ENCODE measurements at regions of chr7 and their contacts with region 1.

Region 1: GRCh38 chr7:76179686-76180085 is 22.0 kb upstream of the SRRM3 start:
- DNase-seq: no peak
- H3K27ac ChIP-seq: no peak overlapping the region
- CTCF ChIP-seq: no peak

Region 2: DNA sequence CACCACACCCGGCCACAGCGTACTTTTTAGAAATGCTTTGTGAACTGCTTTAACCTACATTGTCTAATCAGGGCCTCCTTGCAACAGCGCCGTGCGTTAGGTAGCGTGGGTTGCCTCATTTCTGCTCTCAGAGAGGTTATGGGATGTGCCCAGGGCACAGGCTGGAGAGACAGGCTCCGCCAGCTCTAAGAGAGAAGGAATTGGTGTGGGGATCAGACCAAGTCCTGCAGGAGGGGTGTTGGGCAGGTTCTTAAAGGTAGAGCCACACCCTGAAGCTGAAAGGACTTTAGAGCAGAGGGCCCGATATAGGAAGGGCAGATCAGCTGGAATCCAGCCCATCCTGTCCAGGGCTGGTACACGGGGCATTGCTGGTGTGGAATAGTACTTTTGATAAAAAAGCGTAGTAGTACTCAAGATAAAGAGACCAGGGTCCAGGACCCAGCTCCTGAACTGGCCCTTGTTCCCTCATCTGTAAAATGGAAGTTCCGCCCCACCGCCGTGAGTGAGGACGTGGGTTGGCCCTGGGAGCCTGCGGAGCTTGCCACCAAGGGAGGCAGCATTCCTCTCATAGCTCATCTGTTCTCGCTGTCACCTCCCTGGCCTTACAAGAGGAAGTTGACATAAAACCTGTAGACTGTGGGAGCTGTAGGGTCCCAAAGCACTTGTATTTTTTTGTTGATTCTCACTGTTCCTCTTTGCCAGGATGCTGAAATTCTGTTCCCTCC is 222.5 kb before region 1 on chr7:
- CTCF ChIA-PET with region 1: no interaction called
- POLR2A ChIA-PET with region 1: no interaction called
- DNase-seq: no peak
- H3K27ac ChIP-seq: peak overlapping the region; percentile 7; the same call in 1 of the 2 replicates
- CTCF ChIP-seq: no peak

Region 3: DNA sequence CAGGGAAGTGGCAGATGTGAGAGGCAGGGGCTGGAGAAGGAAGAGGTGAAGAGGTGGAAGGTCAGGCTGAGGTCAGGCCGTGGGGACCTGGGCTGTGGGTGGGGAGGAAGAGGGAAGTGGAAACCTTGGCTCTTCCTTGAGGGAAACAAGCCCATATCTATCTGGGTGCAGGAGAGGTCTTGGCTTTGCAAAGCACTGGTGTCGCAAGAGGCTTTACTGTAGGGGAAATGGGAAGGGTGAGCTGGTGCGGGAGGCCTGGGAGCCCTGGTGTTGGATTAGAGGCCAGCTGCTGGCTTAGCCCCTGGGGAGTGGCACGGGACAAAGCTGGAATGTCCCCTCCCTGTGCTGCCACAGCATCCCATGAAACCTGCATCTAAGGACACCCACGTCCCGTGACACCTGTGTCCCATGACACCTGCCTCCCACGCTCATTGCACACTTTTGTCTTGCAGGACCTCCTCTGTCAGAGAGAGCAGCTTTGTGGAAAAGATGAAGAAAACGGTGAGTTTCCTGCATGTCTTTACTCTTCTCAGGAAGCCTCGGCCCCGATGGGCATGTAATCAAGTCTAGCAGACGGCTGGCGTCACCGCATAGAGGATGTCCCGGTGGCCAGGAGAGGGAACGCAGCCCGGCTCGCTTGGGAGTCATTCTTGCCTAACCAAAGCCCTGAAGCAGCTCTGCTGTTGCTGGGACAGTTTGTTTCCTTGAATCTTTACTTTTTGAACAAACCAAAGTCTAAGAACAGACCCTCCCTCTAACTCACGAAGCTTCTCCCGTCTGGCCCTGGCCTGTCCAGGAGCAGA is 207.5 kb before region 1 on chr7:
- CTCF ChIA-PET with region 1: no interaction called
- POLR2A ChIA-PET with region 1: no interaction called
- DNase-seq: no peak
- H3K27ac ChIP-seq: peak overlapping the region; percentile 6; the same call in 1 of the 2 replicates
- CTCF ChIP-seq: no peak

Region 4: DNA sequence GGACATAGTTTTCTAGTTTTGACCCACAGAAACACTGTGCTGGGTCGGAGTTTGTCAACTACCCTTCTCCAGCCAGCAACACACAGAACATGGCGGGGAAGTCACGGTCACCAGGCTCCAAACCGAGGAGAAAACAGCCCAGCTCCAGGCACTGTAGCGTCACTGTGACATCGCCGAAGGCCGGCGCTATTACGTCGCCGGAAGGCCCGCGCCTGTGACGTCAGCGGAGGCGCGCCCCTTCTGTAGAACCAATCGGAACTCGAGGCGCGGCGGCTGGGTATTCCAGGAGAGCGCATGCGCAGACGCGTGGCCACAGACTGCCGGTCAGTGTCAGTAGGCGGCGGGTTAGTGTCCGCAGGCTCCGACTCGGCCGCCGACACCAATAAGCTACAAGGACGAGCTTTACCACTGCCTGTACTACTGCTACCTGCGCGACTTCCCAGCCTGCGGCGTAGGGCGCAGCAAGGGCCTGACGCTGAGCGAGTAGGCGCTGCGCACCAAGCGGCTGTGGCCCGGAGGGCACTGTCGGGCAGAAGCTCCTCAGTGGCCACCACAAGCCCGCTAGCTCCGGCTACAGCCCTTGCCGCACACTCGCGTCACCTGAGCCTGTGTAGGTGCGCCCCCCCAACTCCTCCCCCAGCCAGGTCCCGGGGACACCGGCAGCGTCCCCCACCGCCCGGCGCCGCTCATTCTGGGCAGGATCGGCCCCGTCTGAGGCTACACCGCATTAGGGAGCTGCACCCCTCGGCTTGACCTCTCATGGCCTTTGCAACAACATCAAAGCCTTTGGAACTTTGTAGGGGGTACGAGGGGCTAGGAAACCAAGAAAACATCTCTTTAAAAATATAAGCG is 13.1 kb before region 1 on chr7:
- CTCF ChIA-PET with region 1: interaction called, 17 read pairs
- POLR2A ChIA-PET with region 1: no interaction called
- DNase-seq: peak; percentile 96
- H3K27ac ChIP-seq: peak overlapping the region; percentile 78
- CTCF ChIP-seq: no peak

Region 5: DNA sequence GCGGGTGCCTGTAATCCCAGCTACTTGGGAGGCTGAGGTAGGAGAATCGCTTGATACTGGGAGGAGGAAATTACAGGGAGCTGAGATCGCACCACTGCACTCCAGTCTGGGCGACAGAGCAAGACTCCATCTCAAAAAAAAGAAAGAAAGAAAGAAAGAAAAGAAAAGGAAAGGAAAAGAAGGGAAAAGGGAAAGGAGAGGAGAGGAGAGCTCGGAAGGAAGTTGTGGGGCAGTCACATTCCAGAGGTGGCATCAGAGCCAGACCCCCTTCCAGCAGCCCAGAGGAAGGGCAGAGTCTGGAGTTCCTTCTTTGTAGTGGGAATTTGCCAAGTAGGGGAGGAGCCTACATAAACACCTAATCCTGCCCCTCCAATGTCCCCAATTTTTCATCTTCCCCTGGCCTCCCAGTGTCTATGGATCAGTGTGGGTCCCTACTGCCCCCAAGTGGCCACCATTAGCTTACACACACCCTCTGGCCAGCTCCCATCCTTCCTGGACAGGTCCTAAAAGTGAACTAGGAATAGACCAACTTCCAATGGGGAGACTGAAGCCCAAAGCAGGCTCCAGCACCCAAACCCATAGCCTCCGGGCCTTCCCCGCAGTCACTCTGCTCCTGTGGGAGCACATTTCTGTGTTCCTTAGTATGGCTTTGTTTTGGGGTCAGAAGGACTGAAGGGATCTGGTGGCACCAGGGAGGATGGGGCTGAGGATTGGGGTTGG is 83.2 kb after region 1 on chr7:
- CTCF ChIA-PET with region 1: interaction called, 30 read pairs
- POLR2A ChIA-PET with region 1: no interaction called
- DNase-seq: peak; percentile 65
- H3K27ac ChIP-seq: no peak overlapping the region
- CTCF ChIP-seq: peak; percentile 81

Region 6: GRCh38 chr7:76314042-76314721 is 134.5 kb after region 1 on chr7:
- CTCF ChIA-PET with region 1: interaction called, 28 read pairs
- POLR2A ChIA-PET with region 1: interaction called, 3 read pairs
- DNase-seq: peak; percentile 90
- H3K27ac ChIP-seq: peak overlapping the region; percentile 100
- CTCF ChIP-seq: peak; percentile 100

Region 7: GRCh38 chr7:76340617-76341131 is 161.0 kb after region 1 on chr7:
- CTCF ChIA-PET with region 1: no interaction called
- POLR2A ChIA-PET with region 1: no interaction called
- DNase-seq: no peak
- H3K27ac ChIP-seq: peak overlapping the region; percentile 76
- CTCF ChIP-seq: no peak